ENCODE measurements at regions of chr1 and their contacts with region 1.

Region 1: GRCh38 chr1:207336559-207337467 is 15.3 kb downstream of the CD55 start:
- DNase-seq: peak; percentile 42
- H3K4me3 Mint-ChIP-seq: peak overlapping the region; percentile 46
- H3K27ac Mint-ChIP-seq: peak overlapping the region; percentile 92
- H3K4me1 Mint-ChIP-seq: peaks cover 59% of the 10 kb centered on the region
- H3K27me3 Mint-ChIP-seq: no peaks in the 10 kb centered on the region

Region 2: GRCh38 chr1:205907794-205908193 is 1429.0 kb before region 1 on chr1:
- intact Hi-C with region 1: no loop called
- DNase-seq: no peak
- H3K4me3 Mint-ChIP-seq: no peak overlapping the region
- H3K27ac Mint-ChIP-seq: no peak overlapping the region
- H3K4me1 Mint-ChIP-seq: no peaks in the 10 kb centered on the region
- H3K27me3 Mint-ChIP-seq: peaks cover 33% of the 10 kb centered on the region

Region 3: DNA sequence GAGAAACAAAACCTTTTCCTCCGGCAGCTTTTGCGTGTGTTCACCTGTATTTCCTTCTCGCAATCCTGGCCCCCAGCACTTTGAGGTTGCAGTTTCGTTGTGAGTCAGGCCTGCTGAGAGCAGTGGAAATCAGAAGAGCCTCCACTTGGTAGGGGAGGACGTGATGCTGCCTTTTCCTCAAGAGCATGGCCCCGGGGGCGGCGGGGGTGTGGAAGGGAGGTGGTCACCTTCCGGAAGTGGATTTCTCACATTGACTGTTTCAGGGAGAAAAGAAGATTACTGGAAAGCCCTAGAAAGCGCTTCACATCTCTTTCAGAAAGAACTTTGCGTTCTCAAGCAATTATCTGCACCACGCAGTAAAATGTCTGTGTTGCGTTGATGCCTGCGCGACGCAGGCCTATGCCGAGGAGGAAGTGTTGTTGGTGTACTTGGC is 552.3 kb before region 1 on chr1:
- intact Hi-C with region 1: loop called (anchors 10 kb)
- DNase-seq: peak; percentile 88
- H3K4me3 Mint-ChIP-seq: peak overlapping the region; percentile 61
- H3K27ac Mint-ChIP-seq: peak overlapping the region; percentile 83
- H3K4me1 Mint-ChIP-seq: peaks cover 67% of the 10 kb centered on the region
- H3K27me3 Mint-ChIP-seq: peaks cover 5% of the 10 kb centered on the region

Region 4: DNA sequence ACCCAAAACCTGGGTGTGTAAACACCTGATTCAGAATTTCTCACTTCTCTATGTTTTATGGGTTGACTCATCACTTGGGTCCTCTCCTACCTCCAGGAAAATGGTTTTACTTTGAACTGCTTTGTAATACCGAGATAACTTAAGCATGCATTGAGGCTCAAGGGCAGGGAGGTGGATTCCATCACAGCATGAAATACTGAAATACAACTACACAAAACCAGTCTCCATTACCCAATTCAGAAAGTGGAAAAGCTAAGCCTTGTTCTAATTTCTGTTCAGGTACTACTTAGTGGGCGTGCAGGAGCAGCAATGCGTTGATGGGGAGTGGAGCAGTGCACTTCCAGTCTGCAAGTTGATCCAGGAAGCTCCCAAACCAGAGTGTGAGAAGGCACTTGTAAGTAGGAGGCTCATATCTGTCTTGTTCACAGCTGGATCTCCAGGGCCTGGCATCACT is 238.9 kb before region 1 on chr1:
- intact Hi-C with region 1: loop called (anchors 2 kb)
- DNase-seq: peak; percentile 19
- H3K4me3 Mint-ChIP-seq: no peak overlapping the region
- H3K27ac Mint-ChIP-seq: peak overlapping the region; percentile 72
- H3K4me1 Mint-ChIP-seq: peaks cover 15% of the 10 kb centered on the region
- H3K27me3 Mint-ChIP-seq: peaks cover 10% of the 10 kb centered on the region

Region 5: GRCh38 chr1:207298653-207299346 is 38.0 kb before region 1 on chr1:
- intact Hi-C with region 1: no loop called
- DNase-seq: no peak
- H3K4me3 Mint-ChIP-seq: no peak overlapping the region
- H3K27ac Mint-ChIP-seq: no peak overlapping the region
- H3K4me1 Mint-ChIP-seq: peaks cover 13% of the 10 kb centered on the region
- H3K27me3 Mint-ChIP-seq: no peaks in the 10 kb centered on the region

Region 6: DNA sequence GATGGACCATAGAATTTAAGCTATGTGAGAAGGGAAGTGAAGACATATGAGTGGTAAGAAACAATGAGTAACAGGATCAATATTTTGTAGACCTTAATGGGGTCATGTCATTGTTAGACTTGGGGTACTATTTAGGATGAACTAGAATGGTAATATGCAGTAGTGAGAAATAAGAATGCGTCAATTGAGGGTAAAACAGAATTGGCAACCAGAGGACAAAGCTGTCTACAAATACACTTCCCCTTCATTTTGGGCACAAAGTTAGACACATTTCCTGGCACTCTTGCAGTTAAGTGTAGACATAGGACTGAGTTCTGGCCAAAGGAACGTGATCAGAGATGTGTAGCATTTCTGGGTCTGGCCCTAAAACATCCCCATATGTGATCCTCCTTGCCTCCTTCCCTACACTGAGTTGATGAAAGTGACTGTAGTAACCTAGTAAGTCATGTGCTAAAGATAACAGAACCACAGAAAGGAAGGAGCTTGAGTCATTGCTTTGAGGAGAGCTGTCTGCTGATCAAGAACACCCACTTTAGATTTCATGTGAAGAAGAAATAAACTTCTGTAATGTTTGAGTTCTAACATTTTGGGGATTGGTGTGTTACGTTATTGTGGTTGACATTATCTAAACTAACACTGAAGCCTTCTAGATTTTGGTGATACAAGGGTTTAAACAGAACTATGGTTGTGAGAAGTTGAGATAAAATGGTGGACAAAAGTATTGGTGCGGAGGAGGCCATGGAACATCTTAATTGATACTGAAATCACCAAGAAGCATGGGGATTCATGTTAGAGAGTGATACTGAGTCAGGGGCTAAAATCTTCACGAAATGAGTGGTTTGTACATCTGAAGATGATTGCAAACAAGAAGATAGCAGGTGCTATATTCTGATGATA is 26.4 kb after region 1 on chr1:
- intact Hi-C with region 1: loop called (anchors 1 kb)
- DNase-seq: no peak
- H3K4me3 Mint-ChIP-seq: no peak overlapping the region
- H3K27ac Mint-ChIP-seq: no peak overlapping the region
- H3K4me1 Mint-ChIP-seq: peaks cover 2% of the 10 kb centered on the region
- H3K27me3 Mint-ChIP-seq: no peaks in the 10 kb centered on the region

Region 7: DNA sequence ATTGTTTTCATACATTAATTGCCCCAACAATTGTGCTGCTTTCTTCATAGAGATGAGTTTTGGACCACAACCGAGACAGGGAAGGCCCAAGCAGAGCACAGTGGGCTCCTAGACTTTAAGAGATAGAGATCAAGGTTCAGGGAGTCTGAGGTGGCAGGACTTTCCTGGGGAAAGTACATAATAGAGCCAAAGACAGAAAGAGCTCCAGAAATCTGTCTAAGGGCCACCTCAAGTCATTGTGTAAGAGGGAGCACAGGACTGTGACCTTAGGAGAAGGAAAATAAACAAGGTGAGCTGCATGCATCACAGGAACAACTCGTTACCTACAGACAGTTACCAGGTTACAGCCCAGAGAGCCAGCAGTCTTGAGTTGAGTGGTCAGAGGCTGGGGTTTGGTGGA is 76.0 kb after region 1 on chr1:
- intact Hi-C with region 1: loop called (anchors 1 kb)
- DNase-seq: no peak
- H3K4me3 Mint-ChIP-seq: no peak overlapping the region
- H3K27ac Mint-ChIP-seq: no peak overlapping the region
- H3K4me1 Mint-ChIP-seq: peaks cover 40% of the 10 kb centered on the region
- H3K27me3 Mint-ChIP-seq: peaks cover 2% of the 10 kb centered on the region

Region 8: DNA sequence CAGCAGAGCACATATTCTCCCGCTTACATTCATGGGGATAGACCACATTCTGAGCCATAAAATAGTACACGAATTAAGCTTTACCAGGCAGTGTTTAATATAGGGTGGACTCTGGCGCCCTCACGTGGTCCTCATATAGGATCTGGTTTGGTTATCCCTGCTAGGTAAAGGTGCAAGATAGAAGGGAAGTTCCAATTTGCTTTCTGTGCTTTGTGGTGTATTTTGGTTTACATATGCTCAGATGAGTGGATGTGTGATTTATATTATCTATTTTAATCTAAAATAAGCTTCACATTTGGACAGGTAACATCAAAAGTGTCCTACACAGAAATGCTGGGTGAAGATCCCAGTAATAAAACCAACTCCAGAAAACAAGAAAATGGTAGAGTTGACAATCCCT is 162.8 kb after region 1 on chr1:
- intact Hi-C with region 1: loop called (anchors 1 kb)
- DNase-seq: peak; percentile 37
- H3K4me3 Mint-ChIP-seq: no peak overlapping the region
- H3K27ac Mint-ChIP-seq: peak overlapping the region; percentile 3
- H3K4me1 Mint-ChIP-seq: peaks cover 21% of the 10 kb centered on the region
- H3K27me3 Mint-ChIP-seq: peaks cover 56% of the 10 kb centered on the region